ENCODE measurements at regions of chr3 and their contacts with region 1.

Region 1: DNA sequence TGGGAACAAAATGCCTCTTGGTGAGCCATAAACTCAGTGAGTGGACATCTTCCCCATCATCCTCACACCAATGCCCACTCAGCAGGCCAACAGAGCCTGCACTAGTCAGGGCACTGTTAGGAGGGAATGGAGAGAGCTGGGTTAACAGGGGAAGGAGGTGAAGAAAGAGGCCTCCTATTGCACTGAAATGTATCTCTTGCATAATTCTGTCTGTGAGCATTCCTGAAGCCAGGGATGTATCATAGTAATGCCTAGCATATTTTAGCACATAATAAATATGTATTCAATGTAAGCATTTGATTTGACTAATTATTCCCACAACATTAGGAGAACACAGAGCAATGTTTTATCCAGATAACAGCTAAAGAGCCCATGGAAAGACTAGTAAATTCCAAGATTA is 81.2 kb downstream of the ANO10 start:
- DNase-seq: no peak
- ATAC-seq: no peak
- H3K4me3 ChIP-seq: no peak overlapping the region
- H3K27ac ChIP-seq: no peak overlapping the region
- H3K4me1 ChIP-seq: peaks cover 8% of the 10 kb centered on the region
- H3K27me3 ChIP-seq: no peaks in the 10 kb centered on the region
- CTCF ChIP-seq: no peak
- EP300 ChIP-seq: no peak
- POLR2A ChIP-seq: no peak
- RAD21 ChIP-seq: no peak

Region 2: DNA sequence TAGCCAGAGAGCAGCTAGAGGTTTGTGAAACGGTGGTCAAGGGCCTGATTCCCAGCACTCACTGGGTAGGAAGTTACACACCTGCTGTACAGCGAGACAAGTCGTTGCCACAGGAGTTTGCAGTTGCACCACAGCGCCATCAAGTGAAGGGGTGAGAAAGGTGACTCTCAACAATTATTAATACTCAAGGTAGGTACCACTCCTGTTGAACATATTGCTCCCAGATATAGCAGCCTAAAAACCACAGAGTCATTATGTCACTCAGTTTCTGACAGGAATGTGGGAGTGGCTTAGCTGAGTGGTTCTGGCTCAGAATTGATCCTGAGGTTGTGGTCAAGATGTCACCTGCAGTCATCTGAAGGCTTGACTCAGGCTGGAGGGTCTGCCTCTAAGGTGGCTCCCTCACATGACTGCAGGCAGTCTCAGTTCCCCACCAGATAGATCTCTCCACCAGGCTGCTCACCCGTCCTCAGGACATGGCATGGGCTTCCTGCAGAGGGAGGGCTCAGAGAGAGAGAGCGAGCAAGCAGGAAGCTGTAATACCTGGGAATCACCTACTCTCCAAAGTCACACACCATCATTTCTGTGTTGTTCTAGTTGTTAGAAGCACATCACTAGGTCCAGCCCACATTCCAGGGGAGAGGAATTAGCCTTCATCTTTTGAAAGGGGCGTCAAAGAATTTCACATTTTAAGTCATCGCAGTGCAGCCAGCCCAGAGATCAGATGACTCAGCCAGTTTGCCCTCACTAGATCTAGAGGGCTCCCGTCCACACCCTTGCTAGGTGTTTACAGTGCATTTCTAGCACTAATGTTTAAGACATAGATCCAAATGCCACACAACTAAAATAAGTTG is 98.2 kb after region 1 on chr3:
- CTCF ChIA-PET with region 1: no interaction called
- POLR2A ChIA-PET with region 1: no interaction called
- in situ Hi-C with region 1: loop called (anchors 10 kb)
- intact Hi-C with region 1: loop called (anchors 1 kb)
- DNase-seq: no peak
- ATAC-seq: peak; percentile 85
- H3K4me3 ChIP-seq: peak overlapping the region in 1 of 3 experiments; percentile 26; a peak in 1 of 6 replicates
- H3K27ac ChIP-seq: no peak overlapping the region
- H3K4me1 ChIP-seq: peaks cover 11% of the 10 kb centered on the region
- H3K27me3 ChIP-seq: no peaks in the 10 kb centered on the region
- CTCF ChIP-seq: peak; percentile 67
- EP300 ChIP-seq: no peak
- POLR2A ChIP-seq: no peak
- RAD21 ChIP-seq: peak; percentile 43; the same call in 1 of the 2 replicates

Region 3: DNA sequence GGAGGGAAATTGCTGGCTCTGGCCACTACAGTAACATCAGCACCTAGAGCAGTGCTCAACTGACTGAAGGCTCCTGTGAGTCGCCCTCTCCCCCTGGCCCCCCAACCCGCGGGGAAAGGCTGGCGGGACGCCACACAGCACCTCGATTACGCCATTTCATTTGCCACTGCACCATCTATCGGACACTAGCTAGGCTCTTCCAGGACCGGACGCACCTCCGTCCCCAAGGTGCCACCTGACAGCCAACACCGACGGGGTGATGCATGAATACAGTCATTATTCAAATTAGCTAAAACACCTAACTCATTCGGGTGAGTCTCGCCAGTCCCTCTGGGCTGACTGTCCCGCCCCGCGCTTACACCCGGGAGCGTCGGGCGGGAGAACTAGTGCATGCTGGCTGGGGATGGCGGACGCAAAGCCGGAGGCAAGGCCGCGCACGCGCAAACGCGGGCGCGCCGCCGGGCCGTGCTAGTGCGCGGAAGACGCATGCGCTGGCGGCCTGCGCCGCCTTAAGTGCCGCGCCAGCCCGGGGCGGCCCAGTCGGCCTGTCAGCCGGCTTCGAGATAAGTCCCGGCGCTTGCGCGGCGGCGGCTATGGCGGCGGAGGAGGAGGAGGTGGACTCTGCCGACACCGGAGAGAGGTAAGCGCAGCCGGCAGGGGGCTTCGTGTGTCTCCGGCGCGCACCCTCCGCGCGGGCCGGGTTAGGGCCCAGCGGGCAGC is 149.9 kb after region 1 on chr3 and contains the start of gene ABHD5:
- CTCF ChIA-PET with region 1: no interaction called
- POLR2A ChIA-PET with region 1: no interaction called
- in situ Hi-C with region 1: no loop called
- intact Hi-C with region 1: loop called (anchors 2 kb)
- DNase-seq: peak; percentile 81
- ATAC-seq: peak; percentile 95
- H3K4me3 ChIP-seq: peak within 1 kb of the TSS; percentile 75 to 87 (median 82)
- H3K27ac ChIP-seq: peak within 1 kb of the TSS; percentile 86
- H3K4me1 ChIP-seq: peaks cover 30% of the 10 kb centered on the region
- H3K27me3 ChIP-seq: no peaks in the 10 kb centered on the region
- CTCF ChIP-seq: peak; percentile 58
- EP300 ChIP-seq: 0 out of 4 replicates have a peak, but pooled peaks of 1 of the 2 experiments have one; percentile 14
- POLR2A ChIP-seq: peak; percentile 97 to 98
- RAD21 ChIP-seq: peak; percentile 81
- total RNA-seq, gene ABHD5: 13.3 and 16.8 TPM in 2 replicates

Region 4: DNA sequence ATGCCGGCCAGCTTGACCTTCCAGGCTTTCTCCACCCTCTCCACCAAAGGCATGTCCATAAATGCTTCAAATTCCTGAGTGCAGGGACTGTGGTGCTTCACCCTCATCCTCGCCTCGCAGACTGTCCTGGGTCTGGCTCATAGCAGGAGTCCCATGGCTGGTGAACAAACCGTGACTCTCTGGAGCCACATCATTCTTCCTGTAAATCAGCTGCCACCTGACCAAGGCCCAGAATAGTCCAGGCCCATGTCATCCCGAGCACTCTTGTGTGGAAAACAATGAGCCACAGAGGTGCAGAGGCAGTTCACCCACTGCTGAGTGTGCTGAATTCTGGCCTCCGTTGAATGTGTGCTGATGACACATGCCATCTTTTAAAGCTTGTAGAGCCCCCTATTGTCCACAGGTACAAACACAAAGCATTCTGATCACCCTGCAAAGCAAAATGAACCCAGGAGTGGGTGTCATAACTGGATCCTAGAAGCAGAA is 218.7 kb after region 1 on chr3:
- CTCF ChIA-PET with region 1: no interaction called
- POLR2A ChIA-PET with region 1: no interaction called
- in situ Hi-C with region 1: loop called (anchors 5 kb)
- intact Hi-C with region 1: loop called (anchors 1 kb)
- DNase-seq: peak; percentile 56
- ATAC-seq: peak; percentile 92
- H3K4me3 ChIP-seq: peak overlapping the region in 1 of 3 experiments; percentile 35; a peak in 1 of 6 replicates
- H3K27ac ChIP-seq: no peak overlapping the region
- H3K4me1 ChIP-seq: peaks cover 19% of the 10 kb centered on the region; the same call in 1 of the 2 replicates
- H3K27me3 ChIP-seq: no peaks in the 10 kb centered on the region
- CTCF ChIP-seq: peak; percentile 72
- EP300 ChIP-seq: no peak
- POLR2A ChIP-seq: no peak
- RAD21 ChIP-seq: 0 out of 2 replicates have a peak, but pooled peaks have one; percentile 8

Region 5: DNA sequence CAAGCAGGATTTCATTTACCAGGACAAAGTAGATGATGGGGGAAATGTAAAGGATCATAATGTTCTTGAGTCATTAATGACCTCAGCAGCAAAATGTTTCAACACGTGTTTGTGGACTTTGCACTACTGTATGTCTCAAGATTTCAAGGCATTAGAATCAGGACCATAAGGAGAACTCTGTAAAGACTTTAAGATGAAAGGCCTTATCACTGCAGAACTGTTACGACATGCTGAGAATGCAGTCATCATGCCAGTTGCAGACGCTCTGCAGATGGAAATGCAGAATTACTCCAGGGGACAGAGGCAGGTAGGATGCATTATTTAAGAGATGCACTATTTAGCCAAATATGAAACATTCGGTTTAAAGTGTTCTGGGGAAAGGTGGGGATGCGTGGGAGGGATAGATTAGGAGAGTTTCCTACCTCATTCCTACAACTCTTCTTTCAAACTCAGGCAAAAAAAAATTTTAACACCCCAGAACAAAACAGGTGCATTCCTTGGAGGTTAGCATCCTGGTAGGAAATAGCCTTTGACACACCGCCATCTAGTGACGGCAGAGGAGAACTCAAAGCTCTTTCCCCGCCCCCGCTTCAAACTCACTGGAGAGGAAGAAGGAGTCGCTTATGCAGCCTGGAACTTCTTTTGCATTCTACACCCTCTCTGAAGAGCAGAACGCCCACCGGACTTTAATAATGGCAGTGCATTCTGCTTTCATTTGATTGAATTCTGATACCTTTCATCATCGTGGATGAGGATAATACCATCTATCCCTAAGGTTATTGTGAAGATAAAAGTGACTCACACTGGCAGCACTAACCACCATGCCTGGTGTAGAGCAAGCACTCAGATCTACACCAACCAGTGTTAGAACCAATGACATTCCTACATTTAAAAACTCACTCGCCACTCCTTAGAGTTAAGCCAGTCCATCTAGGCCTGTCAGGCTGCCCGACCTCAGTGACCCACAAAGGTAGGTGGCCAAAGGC is 658.0 kb after region 1 on chr3:
- CTCF ChIA-PET with region 1: interaction called, 6 read pairs
- POLR2A ChIA-PET with region 1: no interaction called
- in situ Hi-C with region 1: loop called (anchors 10 kb)
- intact Hi-C with region 1: loop called (anchors 1 kb)
- DNase-seq: peak; percentile 55
- ATAC-seq: peak; percentile 84
- H3K4me3 ChIP-seq: no peak overlapping the region
- H3K27ac ChIP-seq: no peak overlapping the region
- H3K4me1 ChIP-seq: no peaks in the 10 kb centered on the region
- H3K27me3 ChIP-seq: peaks cover 0 to 2% of the 10 kb centered on the region in 2 experiments; a peak in 1 of 5 replicates
- CTCF ChIP-seq: peak; percentile 84
- EP300 ChIP-seq: no peak
- POLR2A ChIP-seq: no peak
- RAD21 ChIP-seq: peak; percentile 71

Region 6: DNA sequence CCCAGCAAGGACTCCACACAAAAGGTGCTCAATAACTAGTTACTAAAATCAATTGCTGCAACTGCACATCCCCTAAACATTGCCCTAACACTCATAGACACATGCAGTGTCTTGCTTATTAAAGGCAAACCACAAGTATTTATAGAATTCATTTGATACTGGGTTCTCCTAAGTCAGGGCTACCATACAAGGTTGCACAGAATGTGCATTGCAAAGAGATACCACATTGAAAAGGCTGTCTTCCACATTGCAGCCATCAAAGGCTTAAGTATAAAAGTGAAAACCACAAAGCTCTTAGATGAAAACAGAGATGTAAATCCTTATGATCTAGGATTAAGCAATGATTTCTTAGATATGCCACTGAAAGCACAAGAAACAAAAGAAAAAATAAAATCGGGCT is 667.5 kb after region 1 on chr3:
- CTCF ChIA-PET with region 1: no interaction called
- POLR2A ChIA-PET with region 1: no interaction called
- in situ Hi-C with region 1: loop called (anchors 10 kb)
- intact Hi-C with region 1: no loop called
- DNase-seq: no peak
- ATAC-seq: no peak
- H3K4me3 ChIP-seq: no peak overlapping the region
- H3K27ac ChIP-seq: no peak overlapping the region
- H3K4me1 ChIP-seq: no peaks in the 10 kb centered on the region
- H3K27me3 ChIP-seq: peaks cover 0 to 5% of the 10 kb centered on the region in 2 experiments; a peak in 2 of 5 replicates
- CTCF ChIP-seq: no peak
- EP300 ChIP-seq: no peak
- POLR2A ChIP-seq: no peak
- RAD21 ChIP-seq: no peak

Measured in HepG2 (cell line).